Adrenal gland (tissue), 19 donors: ENCODE measurements at regions of chr1 and their contacts with region 1.

Region 1: GRCh38 chr1:26874896-26875295 is 11.9 kb downstream of the SFN start:
- DNase-seq: no peak
- H3K4me3 ChIP-seq: no peak overlapping the region
- H3K27ac ChIP-seq: no peak overlapping the region
- H3K4me1 ChIP-seq: no peaks in the 10 kb centered on the region
- H3K27me3 ChIP-seq: no peaks in the 10 kb centered on the region
- CTCF ChIP-seq: no peak
- POLR2A ChIP-seq: no peak

Region 2: DNA sequence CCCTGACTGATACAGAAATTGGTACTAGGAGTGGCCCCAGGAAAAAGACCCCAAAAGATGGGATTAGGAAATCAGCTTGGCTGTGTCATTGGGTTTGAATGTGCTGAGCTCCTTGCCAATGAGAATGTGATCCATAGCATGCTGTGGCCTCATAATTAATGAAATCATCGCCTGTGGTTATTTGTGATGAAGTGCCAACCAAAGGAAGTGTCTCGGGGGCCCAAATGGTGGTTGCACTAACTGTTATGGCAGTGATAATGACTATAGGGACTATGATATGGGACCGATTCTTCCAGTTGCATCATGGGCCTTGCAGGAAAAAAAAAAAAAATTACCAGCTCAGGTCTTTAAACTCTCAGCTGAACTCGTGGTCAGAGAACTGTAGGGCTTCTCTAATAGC is 63.8 kb before region 1 on chr1:
- intact Hi-C with region 1: loop called in 1 of 2 experiments (anchors 10 kb)
- DNase-seq: no peak
- H3K4me3 ChIP-seq: no peak overlapping the region
- H3K27ac ChIP-seq: no peak overlapping the region
- H3K4me1 ChIP-seq: no peaks in the 10 kb centered on the region
- H3K27me3 ChIP-seq: no peaks in the 10 kb centered on the region
- CTCF ChIP-seq: no peak
- POLR2A ChIP-seq: no peak

Region 3: GRCh38 chr1:26856604-26857469 is 18.1 kb before region 1 on chr1:
- intact Hi-C with region 1: loop called in 1 of 2 experiments (anchors 2 kb)
- DNase-seq: no peak
- H3K4me3 ChIP-seq: no peak overlapping the region
- H3K27ac ChIP-seq: no peak overlapping the region
- H3K4me1 ChIP-seq: no peaks in the 10 kb centered on the region
- H3K27me3 ChIP-seq: no peaks in the 10 kb centered on the region
- CTCF ChIP-seq: no peak
- POLR2A ChIP-seq: no peak